Posterior cingulate gyrus (tissue), 11 donors: ENCODE measurements at regions of chr16 and their contacts with region 1.

Region 1: GRCh38 chr16:3282730-3283524 is at the start of gene ZNF263:
- DNase-seq: peak; percentile 93 to 99 (median 96)

Region 2: GRCh38 chr16:2968738-2969544 is 314.0 kb before region 1 on chr16 and contains the start of gene PAQR4:
- intact Hi-C with region 1: no loop called
- DNase-seq: peak; percentile 75 to 98 (median 84)

Region 3: GRCh38 chr16:3234543-3235541 is 48.1 kb before region 1 on chr16 and contains the start of gene ZNF200:
- intact Hi-C with region 1: loop called (anchors 1 kb)
- DNase-seq: peak; percentile 93 to 99 (median 96)

Region 4: DNA sequence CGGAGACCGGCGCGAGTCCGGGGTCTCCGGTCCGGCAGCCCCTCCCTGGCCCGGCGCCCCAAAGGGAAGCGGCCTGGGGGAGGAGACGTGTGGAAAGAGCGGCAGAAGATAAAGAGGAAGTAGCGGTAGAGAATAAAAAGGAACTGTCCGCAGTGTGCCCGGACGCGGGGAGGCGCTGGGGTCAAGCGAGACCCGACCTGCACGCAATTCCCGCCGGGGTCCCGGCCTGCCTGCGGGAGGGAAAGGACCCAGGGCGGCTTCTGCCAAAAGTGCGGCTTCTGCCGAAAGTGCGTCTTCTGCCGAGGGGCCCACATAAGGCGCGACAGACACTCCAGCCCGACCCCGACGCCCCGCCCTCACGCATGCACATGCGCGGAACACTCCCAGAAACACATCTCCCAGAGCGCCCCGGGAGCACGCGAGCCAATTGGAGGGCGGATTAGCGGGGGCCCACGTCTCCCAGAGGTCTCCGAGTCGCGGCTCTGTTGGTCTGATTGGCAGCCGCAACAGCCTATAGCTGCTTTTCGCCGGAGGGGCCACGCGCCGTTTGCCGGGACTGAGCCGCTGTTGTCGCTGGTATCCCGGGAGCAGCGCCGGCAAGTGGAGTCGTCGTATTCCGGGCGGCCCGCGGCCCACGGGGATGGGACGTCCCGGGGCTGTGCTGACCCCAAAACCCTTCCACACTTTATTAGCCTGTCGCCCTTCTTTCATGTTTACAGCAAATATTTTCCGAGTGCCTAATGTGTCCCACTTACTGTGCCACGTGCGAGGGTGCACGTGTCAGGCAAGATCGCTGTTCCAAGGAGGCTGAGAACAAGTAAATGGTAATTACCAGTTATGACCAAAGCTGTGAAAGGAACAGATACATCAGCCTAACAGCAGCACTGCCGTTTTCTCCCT is 18.5 kb before region 1 on chr16:
- intact Hi-C with region 1: loop called (anchors 2 kb)
- DNase-seq: peak; percentile 98 to 100 (median 99)

Region 5: GRCh38 chr16:3400779-3401688 is 118.1 kb after region 1 on chr16 and contains the starts of genes ZNF174 and ZSCAN32:
- intact Hi-C with region 1: loop called (anchors 2 kb)
- DNase-seq: peak; percentile 98 to 100 (median 99)

Region 6: DNA sequence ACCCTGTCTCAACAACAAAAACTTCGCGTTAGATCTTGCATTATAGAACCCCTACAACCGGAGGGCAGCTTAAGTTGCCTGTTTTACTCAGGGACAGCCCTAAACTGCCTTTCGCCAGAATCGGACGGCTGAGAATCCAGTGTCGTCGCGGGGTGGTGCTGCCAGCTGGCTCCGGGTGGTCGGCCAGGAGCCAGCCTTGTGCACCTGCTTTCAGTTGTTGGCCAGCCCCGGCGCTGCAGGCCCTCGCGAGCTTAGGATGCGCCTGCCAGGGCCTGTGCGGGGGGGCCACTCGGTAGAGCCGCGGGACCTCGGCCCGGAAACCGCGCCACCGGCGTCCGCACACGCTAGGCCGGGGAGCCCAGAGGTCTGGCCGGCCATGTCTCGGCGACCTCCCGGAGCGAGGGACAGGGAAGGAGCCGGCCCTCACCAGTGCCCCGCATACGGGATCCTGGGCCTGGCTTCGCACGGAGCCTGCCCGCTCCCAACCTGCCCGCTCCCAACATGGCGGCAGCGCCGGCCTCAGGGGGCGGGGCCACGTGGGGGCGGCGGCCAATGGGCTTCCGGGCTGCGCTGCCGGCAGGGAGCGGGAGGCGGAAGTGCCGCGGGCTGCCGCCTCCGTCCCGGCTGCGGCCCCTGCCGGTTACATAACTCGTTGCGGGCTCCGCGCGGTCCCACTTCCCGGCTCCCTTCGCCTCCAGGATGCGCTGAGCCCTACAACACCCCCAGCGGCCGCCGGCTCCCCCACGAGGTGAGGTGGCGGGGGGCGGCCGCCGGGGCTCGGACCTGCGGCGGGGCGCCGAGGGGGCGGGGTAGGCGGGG is 174.7 kb after region 1 on chr16:
- intact Hi-C with region 1: loop called (anchors 5 kb)
- DNase-seq: peak; percentile 77 to 98 (median 87)